Mucosa of descending colon (tissue), 3 donors: ENCODE measurements at regions of chr15 and their contacts with region 1.

Region 1: GRCh38 chr15:39756806-39757522 is 25.7 kb downstream of the FSIP1 start:
- DNase-seq: peak in 1 of 3 donors; percentile 82
- ATAC-seq: peak; percentile 60
- H3K4me3 ChIP-seq: no peak overlapping the region
- H3K4me1 ChIP-seq: no peaks in the 10 kb centered on the region
- CTCF ChIP-seq: peak; percentile 63

Region 2: DNA sequence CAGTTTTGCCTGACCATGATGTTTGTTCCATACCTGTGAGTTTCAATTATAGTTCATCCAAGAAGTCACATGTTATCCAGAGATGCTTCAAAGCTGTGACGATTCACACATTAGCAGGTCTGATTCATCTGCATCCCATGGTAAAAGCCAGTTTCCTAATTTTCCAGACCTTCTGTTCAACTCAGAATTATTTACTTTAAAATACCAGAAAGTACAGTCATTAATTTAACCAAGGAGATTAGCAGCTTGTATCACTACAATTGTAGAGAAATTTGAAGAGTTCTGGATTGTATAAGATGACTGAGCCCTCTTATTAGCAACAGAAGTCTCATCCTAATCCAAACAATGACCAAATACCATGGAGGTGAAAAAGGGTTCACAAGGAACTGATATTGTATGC is 252.2 kb before region 1 on chr15:
- intact Hi-C with region 1: no loop called
- DNase-seq: no peak
- ATAC-seq: no peak
- H3K4me3 ChIP-seq: no peak overlapping the region
- H3K4me1 ChIP-seq: no peaks in the 10 kb centered on the region
- CTCF ChIP-seq: no peak

Region 3: GRCh38 chr15:39594056-39594763 is 162.8 kb before region 1 on chr15:
- intact Hi-C with region 1: loop called (anchors 5 to 10 kb)
- DNase-seq: peak in 2 of 3 donors; percentile 57 to 72
- ATAC-seq: peak; percentile 60
- H3K4me3 ChIP-seq: no peak overlapping the region
- H3K4me1 ChIP-seq: peaks cover 43% of the 10 kb centered on the region
- CTCF ChIP-seq: no peak

Region 4: DNA sequence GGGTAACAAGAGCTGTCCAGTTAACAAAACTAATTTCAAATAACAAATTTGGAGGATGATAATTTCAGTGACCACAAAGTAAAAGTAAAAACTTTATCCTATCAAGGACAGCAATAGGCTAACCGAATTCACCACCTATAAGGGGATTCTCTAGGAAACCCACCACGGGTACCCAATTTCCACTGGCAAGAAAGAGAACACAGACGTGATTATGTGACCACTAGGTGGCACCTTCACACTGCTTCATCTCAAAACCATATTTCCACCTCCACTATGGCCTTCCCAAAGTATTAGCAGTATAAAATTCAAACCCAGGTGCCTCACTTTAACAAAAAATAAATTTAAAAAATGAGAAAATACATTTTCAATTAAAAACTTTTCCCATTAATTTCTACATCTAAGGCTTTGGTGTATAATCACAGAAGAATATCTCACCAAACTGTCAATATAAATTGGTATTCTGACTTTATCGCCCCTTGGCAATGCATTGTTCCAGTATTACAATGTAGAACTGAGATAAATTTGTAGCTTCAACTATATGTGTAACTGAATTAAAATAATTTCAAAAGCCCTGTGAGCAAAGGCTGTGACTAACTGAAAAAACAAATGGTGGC is 70.9 kb before region 1 on chr15:
- intact Hi-C with region 1: loop called (anchors 5 to 10 kb)
- DNase-seq: peak in 1 of 3 donors; percentile 79
- ATAC-seq: peak; percentile 84
- H3K4me3 ChIP-seq: no peak overlapping the region
- H3K4me1 ChIP-seq: no peaks in the 10 kb centered on the region
- CTCF ChIP-seq: peak; percentile 61

Region 5: GRCh38 chr15:40054605-40055545 is 297.9 kb after region 1 on chr15:
- intact Hi-C with region 1: no loop called
- DNase-seq: peak in 2 of 3 donors; percentile 67 to 81
- ATAC-seq: peak; percentile 34
- H3K4me3 ChIP-seq: no peak overlapping the region
- H3K4me1 ChIP-seq: peaks cover 38% of the 10 kb centered on the region
- CTCF ChIP-seq: no peak